ENCODE measurements at regions of chr9 and their contacts with region 1.

Region 1: DNA sequence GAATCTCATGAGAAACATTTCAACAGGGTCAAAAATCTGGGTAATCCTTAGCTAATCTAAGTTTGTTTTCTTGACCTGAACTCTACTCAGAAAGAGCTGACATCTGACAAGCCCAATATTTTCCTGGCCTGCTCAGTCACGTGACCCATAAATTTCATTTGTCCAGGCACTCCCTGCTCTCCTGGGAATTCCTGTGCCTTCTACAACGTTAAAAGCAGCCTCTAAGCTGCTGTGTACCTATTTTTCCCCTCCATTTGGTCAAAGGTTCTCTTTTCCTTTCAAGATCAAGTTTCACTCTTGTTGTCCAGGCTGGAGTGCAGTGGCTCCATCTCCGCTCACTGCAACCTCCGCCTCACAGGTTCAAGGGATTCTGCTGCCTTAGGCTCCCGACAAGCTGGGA is 148.8 kb upstream of the ABCA1 start:
- DNase-seq: peak; percentile 29 to 75
- H3K4me3 ChIP-seq: no peak overlapping the region
- H3K4me3 Mint-ChIP-seq: peak overlapping the region; percentile 24
- H3K27ac Mint-ChIP-seq: peak overlapping the region; percentile 48
- H3K4me1 ChIP-seq: peaks cover 32% of the 10 kb centered on the region
- H3K4me1 Mint-ChIP-seq: peaks cover 19% of the 10 kb centered on the region
- H3K27me3 ChIP-seq: no peaks in the 10 kb centered on the region
- H3K27me3 Mint-ChIP-seq: no peaks in the 10 kb centered on the region
- CTCF ChIP-seq: no peak

Region 2: DNA sequence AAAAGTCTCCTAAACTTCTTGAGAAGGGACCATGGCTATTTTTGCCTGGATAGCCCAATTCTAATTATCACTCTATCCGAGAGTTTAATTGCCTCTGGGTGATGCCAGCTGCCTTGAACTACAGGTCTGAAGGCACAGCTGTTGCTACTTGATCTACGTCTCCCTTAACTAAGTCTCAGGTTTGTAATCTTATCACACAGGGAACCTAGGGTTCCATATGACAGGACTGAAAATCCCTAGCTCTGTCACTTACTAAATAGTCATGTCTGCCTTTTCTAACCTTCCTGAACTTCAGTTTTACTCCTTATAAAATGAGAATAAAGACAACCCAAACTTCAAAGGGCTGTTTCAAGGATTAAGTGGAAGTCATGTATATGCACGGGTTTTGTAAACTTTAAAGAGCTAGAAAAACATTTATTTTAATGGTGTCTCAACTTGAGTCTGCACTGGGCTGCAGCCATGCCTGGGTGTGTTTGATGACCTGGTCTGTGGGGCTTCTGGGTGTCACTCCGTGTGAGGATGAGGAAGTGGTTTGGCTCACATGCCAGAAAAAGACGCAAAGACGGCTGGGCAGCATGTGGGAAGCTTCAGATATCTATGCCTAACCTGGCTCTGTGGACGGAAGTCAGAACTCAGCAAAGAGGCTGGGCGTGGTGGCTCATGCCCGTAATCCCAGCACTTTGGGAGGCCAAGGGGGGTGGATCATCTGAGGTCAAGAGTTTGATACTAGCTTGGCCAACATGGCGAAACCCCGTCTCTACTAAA is 38.4 kb after region 1 on chr9:
- CTCF ChIA-PET with region 1: no interaction called
- POLR2A ChIA-PET with region 1: no interaction called
- intact Hi-C with region 1: loop called (anchors 1 kb)
- DNase-seq: no peak
- H3K4me3 ChIP-seq: no peak overlapping the region
- H3K4me3 Mint-ChIP-seq: no peak overlapping the region
- H3K27ac Mint-ChIP-seq: no peak overlapping the region
- H3K4me1 ChIP-seq: peaks cover 12% of the 10 kb centered on the region
- H3K4me1 Mint-ChIP-seq: peaks cover 8% of the 10 kb centered on the region
- H3K27me3 ChIP-seq: no peaks in the 10 kb centered on the region
- H3K27me3 Mint-ChIP-seq: no peaks in the 10 kb centered on the region
- CTCF ChIP-seq: no peak